ENCODE measurements at regions of chr15 and their contacts with region 1.

Region 1: GRCh38 chr15:91465696-91466095 is 365.6 kb downstream of the SV2B start:
- DNase-seq: no peak
- H3K4me3 ChIP-seq: no peak overlapping the region
- H3K27ac ChIP-seq: no peak overlapping the region
- H3K4me1 ChIP-seq: no peaks in the 10 kb centered on the region
- H3K27me3 ChIP-seq: no peaks in the 10 kb centered on the region
- CTCF ChIP-seq: no peak

Region 2: GRCh38 chr15:91214675-91215590 is 250.8 kb before region 1 on chr15:
- CTCF ChIA-PET with region 1: no interaction called
- POLR2A ChIA-PET with region 1: no interaction called
- intact Hi-C with region 1: no loop called
- DNase-seq: no peak
- H3K4me3 ChIP-seq: no peak overlapping the region
- H3K27ac ChIP-seq: no peak overlapping the region
- H3K4me1 ChIP-seq: no peaks in the 10 kb centered on the region
- H3K27me3 ChIP-seq: peaks cover 21% of the 10 kb centered on the region
- CTCF ChIP-seq: no peak

Region 3: GRCh38 chr15:91316126-91316525 is 149.6 kb before region 1 on chr15:
- CTCF ChIA-PET with region 1: no interaction called
- POLR2A ChIA-PET with region 1: interaction called, 11 read pairs
- intact Hi-C with region 1: no loop called
- DNase-seq: no peak
- H3K4me3 ChIP-seq: no peak overlapping the region
- H3K27ac ChIP-seq: no peak overlapping the region
- H3K4me1 ChIP-seq: no peaks in the 10 kb centered on the region
- H3K27me3 ChIP-seq: no peaks in the 10 kb centered on the region
- CTCF ChIP-seq: no peak

Region 4: GRCh38 chr15:92107529-92107928 is 641.8 kb after region 1 on chr15:
- CTCF ChIA-PET with region 1: interaction called, 21 read pairs
- POLR2A ChIA-PET with region 1: no interaction called
- intact Hi-C with region 1: no loop called
- DNase-seq: no peak
- H3K4me3 ChIP-seq: no peak overlapping the region
- H3K27ac ChIP-seq: no peak overlapping the region
- H3K4me1 ChIP-seq: no peaks in the 10 kb centered on the region
- H3K27me3 ChIP-seq: no peaks in the 10 kb centered on the region
- CTCF ChIP-seq: no peak